ENCODE measurements at regions of chr5 and their contacts with region 1.

Region 1: GRCh38 chr5:135944967-135945560 is 9.7 kb downstream of the LECT2 start:
- DNase-seq: peak in 31 of 42 donors; percentile 1 to 85 (median 52)

Region 2: GRCh38 chr5:135964670-135965320 is 19.7 kb after region 1 on chr5:
- intact Hi-C with region 1: no loop called
- DNase-seq: no peak

Region 3: GRCh38 chr5:136037001-136037705 is 92.1 kb after region 1 on chr5:
- intact Hi-C with region 1: no loop called
- DNase-seq: peak in 1 of 42 donors; percentile 21

Region 4: GRCh38 chr5:136080483-136081216 is 135.6 kb after region 1 on chr5:
- intact Hi-C with region 1: no loop called
- DNase-seq: peak in 41 of 42 donors; percentile 3 to 81 (median 45)

Region 5: GRCh38 chr5:136202469-136203205 is 257.6 kb after region 1 on chr5:
- intact Hi-C with region 1: loop called (anchors 10 kb)
- DNase-seq: peak in 1 of 42 donors; percentile 24

Measured in head of caudate nucleus (tissue), 42 donors.